ENCODE measurements at regions of chr15 and their contacts with region 1.

Region 1: GRCh38 chr15:78000091-78000926 is 77.2 kb downstream of the TBC1D2B start:
- DNase-seq: peak; percentile 86 to 92
- ATAC-seq: peak; percentile 88 to 98
- H3K4me3 ChIP-seq: no peak overlapping the region
- H3K27ac ChIP-seq: no peak overlapping the region
- H3K4me1 ChIP-seq: peaks cover 6% of the 10 kb centered on the region
- CTCF ChIP-seq: peak; percentile 90
- EP300 ChIP-seq: no peak
- POLR2A ChIP-seq: no peak
- RAD21 ChIP-seq: peak; percentile 98 to 99

Region 2: DNA sequence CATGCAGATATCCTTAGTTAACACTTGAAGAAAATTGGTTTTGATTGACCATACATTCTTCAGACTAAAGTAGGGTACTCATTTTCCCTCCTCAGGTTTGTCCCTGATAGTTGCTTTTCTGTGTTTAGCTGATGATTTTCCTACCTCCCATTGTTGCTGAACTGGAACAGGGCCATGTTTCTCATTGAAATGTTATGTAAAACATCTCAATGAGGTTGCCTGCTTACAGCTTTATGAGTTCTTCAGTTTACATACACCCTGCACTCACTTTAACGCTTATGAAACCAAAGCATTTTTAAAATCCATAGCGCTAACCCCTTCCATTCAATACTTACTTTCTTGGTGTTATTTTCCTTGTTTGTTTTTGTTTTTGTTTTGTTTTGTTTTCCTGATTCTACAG is 517.7 kb before region 1 on chr15:
- CTCF ChIA-PET with region 1: no interaction called
- POLR2A ChIA-PET with region 1: no interaction called
- DNase-seq: no peak
- ATAC-seq: no peak
- H3K4me3 ChIP-seq: no peak overlapping the region
- H3K27ac ChIP-seq: no peak overlapping the region
- H3K4me1 ChIP-seq: peaks cover 9% of the 10 kb centered on the region; the same call in 2 of the 3 replicates
- CTCF ChIP-seq: no peak
- EP300 ChIP-seq: no peak
- POLR2A ChIP-seq: no peak
- RAD21 ChIP-seq: no peak

Region 3: GRCh38 chr15:77966540-77967290 is 33.6 kb before region 1 on chr15:
- CTCF ChIA-PET with region 1: interaction called, 76 read pairs
- POLR2A ChIA-PET with region 1: no interaction called
- DNase-seq: peak; percentile 65 to 92
- ATAC-seq: peak; percentile 92 to 99
- H3K4me3 ChIP-seq: no peak overlapping the region
- H3K27ac ChIP-seq: no peak overlapping the region
- H3K4me1 ChIP-seq: no peaks in the 10 kb centered on the region
- CTCF ChIP-seq: peak; percentile 94
- EP300 ChIP-seq: no peak
- POLR2A ChIP-seq: no peak
- RAD21 ChIP-seq: peak; percentile 92 to 94

Region 4: DNA sequence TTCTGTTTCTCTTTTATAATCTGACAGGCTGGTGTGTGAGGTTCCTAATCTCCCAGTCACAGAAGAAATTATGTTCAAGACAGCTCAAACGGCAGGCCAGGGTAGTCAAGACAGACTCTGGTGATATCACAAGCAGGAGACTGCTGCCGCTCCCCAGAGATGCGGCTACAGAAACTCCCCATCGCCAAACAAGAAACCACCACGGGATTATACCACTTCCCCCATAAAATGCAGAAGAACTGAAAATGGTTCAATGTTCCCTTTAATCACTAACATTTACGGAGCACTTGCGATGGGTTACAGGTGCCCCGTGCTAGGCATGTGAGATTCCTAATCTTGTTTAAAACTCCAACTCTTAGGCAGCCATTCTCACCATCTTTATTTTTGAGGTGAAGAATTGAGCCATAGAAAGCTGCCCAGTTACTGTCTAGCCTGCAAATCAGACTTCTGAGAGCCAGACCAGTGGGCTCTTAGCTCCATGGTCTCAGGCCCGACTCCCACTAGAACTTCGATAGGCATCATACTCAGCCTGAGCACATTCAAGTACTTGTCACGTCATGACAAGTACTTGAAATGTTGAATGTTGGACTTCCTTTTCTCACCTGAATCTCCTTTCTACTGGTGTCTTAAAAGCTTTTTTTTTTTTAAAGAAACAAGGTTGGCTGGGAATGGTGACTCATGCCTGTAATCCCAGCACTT is 18.8 kb after region 1 on chr15:
- CTCF ChIA-PET with region 1: interaction called, 20 read pairs
- POLR2A ChIA-PET with region 1: no interaction called
- DNase-seq: no peak
- ATAC-seq: no peak
- H3K4me3 ChIP-seq: no peak overlapping the region
- H3K27ac ChIP-seq: no peak overlapping the region; a peak in 1 of 6 replicates
- H3K4me1 ChIP-seq: no peaks in the 10 kb centered on the region
- CTCF ChIP-seq: no peak
- EP300 ChIP-seq: no peak
- POLR2A ChIP-seq: no peak
- RAD21 ChIP-seq: no peak

Region 5: DNA sequence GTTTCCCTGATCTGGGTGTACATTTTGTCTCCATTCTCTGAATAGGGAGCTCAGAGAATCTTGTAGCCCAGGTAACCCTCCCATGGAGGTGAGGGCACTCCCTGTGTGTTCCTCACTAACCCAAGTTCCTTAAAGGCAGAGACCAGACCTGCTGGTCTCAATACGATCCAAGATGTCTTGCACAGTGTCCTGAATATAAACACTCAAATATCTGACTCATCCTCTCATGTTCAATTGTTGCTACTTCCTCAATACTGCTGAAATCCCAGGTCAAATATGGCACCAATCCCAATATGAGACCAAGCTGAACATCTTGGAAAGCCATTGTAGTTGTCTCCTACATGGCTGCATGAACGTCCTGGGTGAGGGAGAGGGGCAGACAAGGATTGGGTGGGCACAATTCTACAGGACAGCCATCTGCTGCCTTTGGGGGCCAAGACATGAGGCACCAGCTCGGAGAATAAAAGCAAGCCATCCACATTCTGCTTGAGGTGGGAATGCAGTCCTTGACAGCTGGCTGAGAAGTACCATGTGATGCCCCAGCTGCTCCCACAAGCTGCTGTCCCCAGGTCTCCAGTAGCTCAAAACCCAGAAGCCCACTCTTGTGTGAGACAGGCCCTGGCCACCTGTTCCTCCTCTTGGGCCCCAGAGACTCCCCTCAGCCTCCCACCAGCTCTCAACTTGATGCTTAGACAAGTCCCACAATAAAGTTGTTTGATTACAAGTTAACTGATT is 59.0 kb after region 1 on chr15:
- CTCF ChIA-PET with region 1: interaction called, 11 read pairs
- POLR2A ChIA-PET with region 1: no interaction called
- DNase-seq: no peak
- ATAC-seq: no peak
- H3K4me3 ChIP-seq: no peak overlapping the region
- H3K27ac ChIP-seq: peak overlapping the region in 1 of 2 experiments; percentile 57; a peak in 4 of 6 replicates
- H3K4me1 ChIP-seq: peaks cover 44% of the 10 kb centered on the region
- CTCF ChIP-seq: no peak
- EP300 ChIP-seq: no peak
- POLR2A ChIP-seq: no peak
- RAD21 ChIP-seq: no peak

Region 6: GRCh38 chr15:78077058-78077877 is 77.0 kb after region 1 on chr15 and contains the start of gene TBC1D2B:
- CTCF ChIA-PET with region 1: interaction called, 10 read pairs
- POLR2A ChIA-PET with region 1: no interaction called
- DNase-seq: peak; percentile 55 to 58
- ATAC-seq: peak; percentile 80 to 83
- H3K4me3 ChIP-seq: peak within 1 kb of the TSS; percentile 83
- H3K27ac ChIP-seq: peak within 1 kb of the TSS; percentile 81 to 91
- H3K4me1 ChIP-seq: peaks cover 20% of the 10 kb centered on the region
- CTCF ChIP-seq: peak; percentile 31; the same call in 1 of the 3 replicates
- EP300 ChIP-seq: no peak
- POLR2A ChIP-seq: peak; percentile 65
- RAD21 ChIP-seq: no peak
- polyA plus RNA-seq, gene TBC1D2B: 13.9 and 14.9 TPM in 2 replicates

Region 7: GRCh38 chr15:78131295-78132061 is 131.2 kb after region 1 on chr15 and contains the start of gene CIB2:
- CTCF ChIA-PET with region 1: interaction called, 10 read pairs
- POLR2A ChIA-PET with region 1: no interaction called
- DNase-seq: peak; percentile 71 to 92
- ATAC-seq: peak; percentile 84 to 87
- H3K4me3 ChIP-seq: peak within 1 kb of the TSS; percentile 86
- H3K27ac ChIP-seq: peak within 1 kb of the TSS; percentile 91 to 94
- H3K4me1 ChIP-seq: peaks cover 38% of the 10 kb centered on the region
- CTCF ChIP-seq: peak; percentile 85
- EP300 ChIP-seq: no peak
- POLR2A ChIP-seq: peak; percentile 74
- RAD21 ChIP-seq: peak; percentile 61 to 81
- polyA plus RNA-seq, gene CIB2: 16.4 and 21.2 TPM in 2 replicates